GM10248 (cell line): ENCODE measurements at regions of chr5 and their contacts with region 1.

Region 1: GRCh38 chr5:14270209-14270702 is 127.1 kb downstream of the TRIO start:
- DNase-seq: peak; percentile 68
- CTCF ChIP-seq: peak; percentile 67

Region 2: GRCh38 chr5:14108170-14108996 is 161.9 kb before region 1 on chr5:
- CTCF ChIA-PET with region 1: interaction called, 19 read pairs
- POLR2A ChIA-PET with region 1: no interaction called
- DNase-seq: peak; percentile 75
- CTCF ChIP-seq: peak; percentile 73

Region 3: DNA sequence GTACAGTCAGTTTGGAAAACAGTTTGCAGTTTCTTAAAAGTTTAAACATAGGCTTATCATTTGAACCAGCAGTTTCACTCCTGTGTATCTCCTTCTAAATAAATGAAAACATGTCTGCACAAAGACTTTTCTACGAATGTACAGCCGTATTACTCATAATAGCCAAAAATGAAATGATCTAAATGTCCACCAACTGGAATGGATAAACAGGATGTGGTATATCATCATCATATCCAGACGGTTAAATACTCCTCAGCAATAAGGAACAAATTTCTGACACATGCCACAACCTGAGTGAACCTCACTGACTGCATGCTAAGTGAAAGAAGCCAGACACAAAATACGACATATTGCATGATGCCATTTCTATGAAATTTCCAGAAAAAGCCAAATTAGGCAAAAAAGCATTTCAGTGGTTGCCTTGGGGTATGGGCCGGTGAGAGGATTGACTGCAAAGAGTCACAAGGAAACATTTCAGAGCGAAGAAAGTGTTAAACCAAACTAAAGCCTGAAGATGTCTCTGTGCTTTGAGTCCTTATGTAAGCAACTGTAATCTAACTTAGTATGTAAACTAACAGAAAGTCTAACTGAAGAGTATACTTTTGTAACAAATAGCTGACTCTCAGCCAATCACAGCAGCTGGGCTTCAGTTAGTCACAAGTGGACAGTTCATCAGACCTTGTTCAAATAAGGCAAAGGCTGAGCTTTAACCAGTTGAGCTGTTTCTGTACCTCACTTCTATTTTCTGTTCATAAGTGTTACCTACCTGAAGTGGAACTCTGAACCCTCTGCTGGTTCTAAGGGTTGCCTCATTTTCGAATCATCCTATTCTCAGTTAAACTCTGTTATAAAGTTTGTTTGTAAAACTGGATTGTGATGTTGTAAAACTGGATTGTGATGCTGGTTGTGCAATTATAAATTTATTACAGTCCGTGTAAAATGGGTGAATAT is 61.9 kb before region 1 on chr5:
- CTCF ChIA-PET with region 1: interaction called, 14 read pairs
- POLR2A ChIA-PET with region 1: no interaction called
- DNase-seq: peak; percentile 49
- CTCF ChIP-seq: no peak

Region 4: DNA sequence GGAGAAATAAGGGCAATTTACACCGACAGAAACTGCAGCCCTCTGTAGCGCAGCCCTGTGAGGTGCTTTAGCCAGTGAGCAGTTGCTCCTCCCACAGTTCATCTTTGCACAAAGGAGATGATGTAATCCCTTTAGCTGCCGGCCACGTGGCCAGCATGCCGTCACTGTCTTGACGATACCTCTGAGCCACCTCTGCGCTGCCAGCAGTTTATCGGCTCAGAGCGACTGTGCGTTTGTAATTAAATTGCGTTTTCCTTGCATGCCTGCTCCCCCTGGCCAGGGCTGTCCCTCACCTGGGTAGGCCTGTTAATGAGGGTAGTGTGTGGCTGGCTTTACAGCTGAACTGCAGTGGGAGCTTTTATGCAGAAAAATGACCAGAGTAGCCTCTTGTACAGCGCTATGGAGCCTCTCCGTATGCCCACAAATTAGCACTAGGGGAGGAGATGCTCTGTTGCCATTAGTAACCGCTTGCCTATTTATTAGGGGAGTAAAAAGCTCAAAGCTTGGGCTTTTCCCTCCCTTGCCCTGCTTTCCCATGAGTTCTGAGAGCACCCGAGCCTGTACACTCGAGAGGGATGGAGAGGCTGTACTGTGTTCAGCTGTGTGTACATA is 20.1 kb before region 1 on chr5:
- CTCF ChIA-PET with region 1: interaction called, 17 read pairs
- POLR2A ChIA-PET with region 1: no interaction called
- DNase-seq: no peak
- CTCF ChIP-seq: no peak

Region 5: DNA sequence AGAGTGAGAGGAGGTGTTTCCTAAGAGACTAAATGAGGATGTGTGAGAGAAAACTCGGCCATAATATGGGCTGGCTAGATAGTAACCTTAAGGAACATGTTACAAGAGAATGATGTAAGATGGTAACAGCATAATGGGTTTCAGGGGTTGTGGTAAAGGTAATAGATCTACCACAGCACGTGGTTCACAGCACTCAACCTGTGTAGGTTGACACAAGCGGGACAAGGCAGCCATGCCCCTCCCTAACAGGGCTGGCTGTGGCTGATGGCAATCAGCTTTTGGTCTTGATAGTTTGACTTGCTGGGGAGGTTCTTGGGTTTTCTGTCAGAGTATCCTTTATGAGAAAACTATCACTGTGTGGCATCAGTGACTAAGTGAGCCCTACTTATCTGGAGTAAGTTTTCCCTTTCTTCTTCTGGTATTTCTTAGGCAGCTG is 11.5 kb after region 1 on chr5:
- CTCF ChIA-PET with region 1: interaction called, 42 read pairs
- POLR2A ChIA-PET with region 1: no interaction called
- DNase-seq: peak; percentile 34
- CTCF ChIP-seq: no peak

Region 6: DNA sequence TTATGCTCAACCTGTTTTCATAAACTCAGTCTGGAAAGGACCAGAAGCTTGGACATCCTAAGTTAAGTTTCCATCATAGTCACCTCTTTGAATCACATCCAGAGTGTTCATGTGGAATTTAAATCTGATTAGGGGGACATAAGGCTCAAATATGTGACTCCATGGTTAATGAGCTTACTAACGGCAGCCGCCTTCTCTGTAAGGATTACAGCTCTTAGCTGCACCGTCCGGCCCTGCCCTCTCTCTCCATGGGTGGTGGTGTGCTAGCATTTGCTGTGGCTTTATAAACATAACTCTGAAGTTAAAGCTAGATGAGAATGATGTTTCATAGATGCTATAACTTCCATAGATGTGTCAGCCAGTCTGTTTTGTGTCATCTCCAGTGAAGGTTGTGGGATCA is 29.4 kb after region 1 on chr5:
- CTCF ChIA-PET with region 1: interaction called, 16 read pairs
- POLR2A ChIA-PET with region 1: no interaction called
- DNase-seq: no peak
- CTCF ChIP-seq: no peak

Region 7: DNA sequence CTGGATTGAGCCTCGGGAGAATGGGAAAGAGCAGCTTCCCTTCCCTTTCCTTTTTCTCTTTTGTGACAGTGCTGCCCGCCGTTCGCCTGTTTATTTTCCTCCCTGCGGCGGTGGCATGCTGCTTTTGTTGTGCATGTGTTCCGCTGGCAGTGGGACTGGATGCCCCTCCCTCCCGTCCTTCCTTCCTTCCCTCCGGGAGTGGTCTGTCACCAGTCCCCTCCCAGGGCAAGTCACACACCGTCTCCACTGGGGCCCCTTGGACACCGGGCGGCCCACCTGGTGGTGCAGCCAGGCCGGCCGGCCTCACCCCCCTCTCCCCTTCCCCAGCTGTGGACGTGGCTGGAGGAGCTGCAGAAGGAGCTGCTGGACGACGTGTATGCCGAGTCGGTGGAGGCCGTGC is 87.6 kb after region 1 on chr5:
- CTCF ChIA-PET with region 1: no interaction called
- POLR2A ChIA-PET with region 1: no interaction called
- DNase-seq: no peak
- CTCF ChIP-seq: no peak

Region 8: GRCh38 chr5:14753912-14754311 is 483.7 kb after region 1 on chr5:
- CTCF ChIA-PET with region 1: no interaction called
- POLR2A ChIA-PET with region 1: no interaction called
- DNase-seq: no peak
- CTCF ChIP-seq: no peak